Activated CD4-positive, alpha-beta memory T cell treated with anti-CD3 and anti-CD28 coated beads, Interleukin-2, amount 10 ng/mL, durations not matched to agents 7 days and 5 days (primary cell): ENCODE measurements at regions of chr6 and their contacts with region 1.

Region 1: GRCh38 chr6:90393232-90393884 is 96.7 kb upstream of the BACH2 start:
- DNase-seq: peak; percentile 80
- H3K4me3 Mint-ChIP-seq: no peak overlapping the region
- H3K27ac Mint-ChIP-seq: peak overlapping the region; percentile 60
- H3K4me1 Mint-ChIP-seq: peaks cover 60% of the 10 kb centered on the region
- H3K27me3 Mint-ChIP-seq: peaks cover 8% of the 10 kb centered on the region

Region 2: GRCh38 chr6:89940225-89941027 is 452.9 kb before region 1 on chr6:
- CTCF ChIA-PET with region 1: interaction called, 37 read pairs
- POLR2A ChIA-PET with region 1: interaction called, 6 read pairs
- DNase-seq: peak; percentile 80
- H3K4me3 Mint-ChIP-seq: no peak overlapping the region
- H3K27ac Mint-ChIP-seq: no peak overlapping the region
- H3K4me1 Mint-ChIP-seq: peaks cover 22% of the 10 kb centered on the region
- H3K27me3 Mint-ChIP-seq: no peaks in the 10 kb centered on the region

Region 3: DNA sequence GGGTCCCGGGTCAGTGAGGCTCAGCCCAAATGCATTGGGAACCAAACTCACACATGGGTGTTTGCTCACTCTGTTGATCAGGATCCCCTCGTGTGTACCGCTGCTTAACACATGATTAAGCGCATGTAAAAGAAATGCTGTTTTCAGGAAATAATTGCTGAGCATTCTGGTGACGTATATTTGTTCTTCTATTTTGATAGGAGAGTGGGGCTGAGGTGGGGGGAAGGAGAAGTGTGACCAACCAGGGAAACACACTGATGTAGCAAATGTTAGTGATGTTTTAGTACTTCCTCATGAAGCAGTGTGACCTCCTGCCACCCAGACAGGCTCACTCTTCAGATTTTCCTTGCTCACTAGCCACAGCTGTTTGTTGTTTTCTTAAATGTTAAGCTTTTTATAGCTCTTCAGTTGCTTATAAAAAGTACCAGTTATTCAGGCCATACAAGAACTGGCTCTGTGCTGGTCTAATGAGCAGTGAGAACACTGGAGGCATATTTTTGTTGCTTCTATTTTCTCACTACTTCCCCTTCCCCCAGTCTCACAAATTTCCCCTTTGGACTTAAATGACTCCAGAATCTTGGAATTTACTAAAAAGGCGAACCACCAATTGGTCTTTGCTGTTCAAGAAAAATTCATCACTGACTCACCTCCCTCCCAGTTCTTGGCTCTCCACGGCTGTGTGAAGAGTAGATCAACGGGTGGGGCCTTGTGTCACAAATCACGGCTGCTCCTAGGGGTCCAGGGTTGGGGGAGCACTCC is 17.5 kb before region 1 on chr6:
- CTCF ChIA-PET with region 1: interaction called, 15 read pairs
- POLR2A ChIA-PET with region 1: interaction called, 3 read pairs
- DNase-seq: no peak
- H3K4me3 Mint-ChIP-seq: no peak overlapping the region
- H3K27ac Mint-ChIP-seq: no peak overlapping the region
- H3K4me1 Mint-ChIP-seq: peaks cover 2% of the 10 kb centered on the region
- H3K27me3 Mint-ChIP-seq: peaks cover 7% of the 10 kb centered on the region

Region 4: DNA sequence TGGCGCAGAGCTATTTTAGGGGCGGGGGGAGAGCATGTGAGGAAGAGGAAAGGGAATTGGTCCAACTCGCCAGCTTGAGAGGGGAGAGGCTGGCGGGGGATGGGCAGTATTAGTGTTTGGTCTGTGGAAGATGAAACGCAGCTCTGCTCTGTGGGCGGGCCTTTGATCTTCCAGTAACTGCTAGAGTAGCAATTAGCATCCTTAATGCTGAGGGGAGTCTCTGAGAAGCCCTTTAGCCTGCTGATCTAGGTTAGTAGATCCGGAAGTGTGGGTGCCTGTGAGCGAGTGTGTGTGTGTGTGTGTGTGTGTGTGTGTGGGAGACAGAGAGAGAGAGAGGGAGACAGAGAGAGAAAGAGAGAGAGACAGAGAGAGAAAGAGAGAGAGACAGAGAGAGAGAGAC is 20.5 kb after region 1 on chr6:
- CTCF ChIA-PET with region 1: interaction called, 94 read pairs
- POLR2A ChIA-PET with region 1: interaction called, 233 read pairs
- DNase-seq: peak; percentile 88
- H3K4me3 Mint-ChIP-seq: peak overlapping the region; percentile 82
- H3K27ac Mint-ChIP-seq: peak overlapping the region; percentile 97
- H3K4me1 Mint-ChIP-seq: peaks cover 86% of the 10 kb centered on the region
- H3K27me3 Mint-ChIP-seq: peaks cover 2% of the 10 kb centered on the region

Region 5: GRCh38 chr6:90458353-90459224 is 65.2 kb after region 1 on chr6:
- CTCF ChIA-PET with region 1: interaction called, 15 read pairs
- POLR2A ChIA-PET with region 1: interaction called, 109 read pairs
- DNase-seq: peak; percentile 82
- H3K4me3 Mint-ChIP-seq: peak overlapping the region; percentile 56
- H3K27ac Mint-ChIP-seq: peak overlapping the region; percentile 89
- H3K4me1 Mint-ChIP-seq: peaks cover 74% of the 10 kb centered on the region
- H3K27me3 Mint-ChIP-seq: no peaks in the 10 kb centered on the region

Region 6: DNA sequence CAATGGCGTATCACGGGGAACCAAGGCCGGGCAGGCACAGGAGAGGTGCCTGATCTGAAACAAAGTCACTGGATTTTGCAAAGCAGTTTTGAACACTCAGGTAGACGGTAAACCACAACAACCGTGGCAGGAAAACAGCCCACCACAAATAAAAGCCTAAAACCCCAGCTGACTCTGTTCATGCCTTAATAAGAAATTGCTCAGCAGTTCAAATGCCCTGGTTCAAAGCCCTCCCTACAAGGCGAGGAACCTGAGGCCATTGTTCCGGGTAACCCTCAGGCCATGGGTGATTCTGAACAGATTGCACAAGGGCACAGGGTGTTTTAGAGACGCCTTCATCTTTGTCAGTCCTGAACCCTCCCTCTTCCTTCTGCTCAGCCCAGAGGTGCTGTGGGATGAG is 79.4 kb after region 1 on chr6:
- CTCF ChIA-PET with region 1: interaction called, 132 read pairs
- POLR2A ChIA-PET with region 1: interaction called, 324 read pairs
- DNase-seq: peak; percentile 75
- H3K4me3 Mint-ChIP-seq: peak overlapping the region; percentile 70
- H3K27ac Mint-ChIP-seq: peak overlapping the region; percentile 92
- H3K4me1 Mint-ChIP-seq: peaks cover 98% of the 10 kb centered on the region
- H3K27me3 Mint-ChIP-seq: peaks cover 12% of the 10 kb centered on the region